ENCODE measurements at regions of chr16 and their contacts with region 1.

Region 1: GRCh38 chr16:66406534-66407221 is 20.4 kb upstream of the BEAN1 start:
- DNase-seq: peak; percentile 89
- CTCF ChIP-seq: peak; percentile 88

Region 2: GRCh38 chr16:66357153-66357928 is 49.3 kb before region 1 on chr16:
- CTCF ChIA-PET with region 1: interaction called, 15 read pairs
- POLR2A ChIA-PET with region 1: no interaction called
- DNase-seq: peak; percentile 71
- CTCF ChIP-seq: peak; percentile 79

Region 3: GRCh38 chr16:66391726-66392670 is 14.7 kb before region 1 on chr16:
- CTCF ChIA-PET with region 1: interaction called, 10 read pairs
- POLR2A ChIA-PET with region 1: no interaction called
- DNase-seq: no peak
- CTCF ChIP-seq: no peak

Region 4: DNA sequence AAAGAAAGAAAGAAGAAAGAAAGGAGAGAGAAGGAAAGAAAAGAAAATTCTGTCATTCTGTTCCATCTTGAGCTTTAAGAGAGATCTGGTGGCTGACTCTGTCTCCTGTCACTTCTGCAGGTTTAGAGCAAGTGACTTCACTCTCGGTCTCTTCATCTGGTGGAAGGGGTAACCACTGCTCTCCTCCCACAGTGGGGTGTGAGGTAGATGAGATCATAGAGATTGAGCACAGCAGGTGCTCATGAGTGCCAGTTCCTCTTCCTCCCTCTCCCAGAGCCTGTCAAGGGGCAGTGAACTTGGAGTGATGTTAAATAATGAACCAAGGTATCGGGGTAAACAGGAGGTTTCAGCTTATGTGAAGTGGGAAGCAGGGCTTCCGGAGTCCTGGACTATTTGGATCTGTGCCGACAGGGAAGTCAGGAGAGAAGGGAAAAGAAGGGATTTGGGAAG is 68.1 kb after region 1 on chr16:
- CTCF ChIA-PET with region 1: interaction called, 42 read pairs
- POLR2A ChIA-PET with region 1: no interaction called
- DNase-seq: peak; percentile 80
- CTCF ChIP-seq: no peak

Region 5: DNA sequence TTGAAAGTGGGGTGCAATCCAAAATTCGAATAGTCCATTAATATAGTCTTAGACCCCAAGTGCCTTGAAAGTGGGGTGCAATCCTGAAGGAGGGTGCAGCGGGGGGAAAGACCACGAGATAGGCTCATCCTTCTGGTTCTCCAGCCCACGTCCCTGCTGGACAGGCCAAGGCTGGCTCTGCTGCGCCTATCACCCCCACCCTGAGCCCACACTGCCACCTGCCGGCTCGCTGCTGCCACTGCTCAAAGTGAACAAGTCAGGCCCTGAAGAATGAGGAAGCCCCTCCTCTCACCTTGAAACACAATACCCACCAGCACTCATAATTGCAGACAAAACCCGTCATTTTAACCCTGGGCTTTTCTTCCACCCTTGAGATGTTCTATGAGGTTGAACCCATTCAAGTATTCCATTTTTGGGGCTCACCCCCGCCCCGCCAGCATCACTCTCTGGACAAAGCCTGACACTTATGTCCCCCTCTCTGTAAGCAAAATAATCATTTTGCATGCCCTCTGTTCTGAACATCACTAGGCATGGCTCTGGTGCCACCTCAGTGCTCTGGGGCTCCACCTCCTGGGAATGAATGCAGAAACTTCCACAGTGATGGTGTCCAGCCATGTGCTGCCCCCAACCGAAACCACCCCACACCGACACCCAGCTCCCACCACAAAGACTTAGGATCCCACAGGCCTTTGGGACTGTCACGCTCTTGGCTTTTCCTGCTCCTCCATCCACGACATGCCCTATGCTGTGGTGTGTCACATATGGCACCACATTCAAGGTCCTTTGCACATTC is 77.2 kb after region 1 on chr16:
- CTCF ChIA-PET with region 1: interaction called, 42 read pairs
- POLR2A ChIA-PET with region 1: no interaction called
- DNase-seq: peak; percentile 85
- CTCF ChIP-seq: peak; percentile 99

Region 6: GRCh38 chr16:66580605-66581209 is 174.0 kb after region 1 on chr16:
- CTCF ChIA-PET with region 1: interaction called, 12 read pairs
- POLR2A ChIA-PET with region 1: no interaction called
- DNase-seq: no peak
- CTCF ChIP-seq: no peak